Activated T-helper 1 cell treated with anti-CD3 and anti-CD28 coated beads, Interleukin-12 subunit alpha, Interleukin-12 subunit beta, Interleukin-2, Interleukin-4 antibody, amounts not matched to agents 30 ng/mL and 10 ng/mL and 1 ng/mL, durations not matched to agents 14 hours and 24 hours and 36 hours (primary cell): ENCODE measurements at regions of chr10 and their contacts with region 1.

Region 1: DNA sequence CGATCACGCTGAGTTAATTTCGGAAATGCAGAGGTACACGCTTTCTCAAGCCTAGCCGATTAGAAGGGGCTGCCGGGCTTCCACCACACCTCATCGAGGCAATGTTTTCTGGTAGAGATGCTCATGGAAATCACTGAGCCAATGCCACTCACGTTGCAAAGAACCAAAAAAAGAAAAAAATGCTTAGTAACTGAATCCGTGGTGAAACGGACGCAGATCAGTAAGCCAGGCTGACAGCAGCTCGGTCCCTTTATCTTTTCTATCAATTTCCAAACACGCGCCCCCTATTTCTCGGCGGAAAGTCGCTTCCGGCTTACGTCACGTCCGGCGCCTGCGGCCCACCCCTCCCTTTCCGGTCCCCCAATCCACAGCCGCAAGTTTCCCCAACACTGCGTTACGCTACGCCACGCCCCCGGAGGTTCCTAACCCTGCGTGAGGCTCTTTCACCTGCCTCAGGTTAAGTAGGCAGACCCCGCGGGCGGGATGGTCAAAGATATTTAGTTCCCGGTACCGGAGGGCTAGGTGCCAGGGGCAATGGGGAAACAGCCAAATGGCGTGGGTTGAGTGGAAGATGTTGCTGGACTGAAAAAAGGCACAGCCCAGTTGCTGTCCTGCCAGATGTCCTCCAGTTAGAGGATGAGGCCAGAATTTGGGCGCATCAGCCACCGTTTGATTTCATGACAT is at the start of gene NSUN6:
- DNase-seq: peak; percentile 91
- H3K4me3 Mint-ChIP-seq: peak within 1 kb of the TSS; percentile 96
- H3K27ac Mint-ChIP-seq: peak within 1 kb of the TSS; percentile 96
- H3K4me1 Mint-ChIP-seq: peaks cover 48% of the 10 kb centered on the region
- H3K27me3 Mint-ChIP-seq: no peaks in the 10 kb centered on the region
- total RNA-seq, gene NSUN6: 12.2 and 12.8 TPM in 2 replicates

Region 2: DNA sequence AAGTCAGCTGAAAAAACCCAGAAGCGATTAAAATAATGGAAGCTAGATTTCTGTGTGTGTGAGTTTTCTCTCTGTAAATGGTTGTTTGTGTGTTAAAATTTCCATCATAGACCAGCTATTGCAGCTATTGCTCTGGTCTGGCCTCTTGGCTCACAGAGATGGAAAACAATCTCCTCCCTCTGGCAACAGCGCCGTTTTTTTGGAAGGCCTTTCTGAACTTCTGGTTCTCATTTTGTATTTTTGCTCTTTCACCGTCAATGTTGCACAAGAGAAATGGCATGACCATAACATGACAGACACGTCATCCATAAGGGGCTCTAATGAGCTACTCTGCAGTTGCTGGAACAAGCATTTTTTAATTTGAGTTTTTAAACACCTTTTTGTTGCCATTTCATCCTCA is 1612.8 kb before region 1 on chr10:
- intact Hi-C with region 1: no loop called
- DNase-seq: no peak
- H3K4me3 Mint-ChIP-seq: no peak overlapping the region
- H3K27ac Mint-ChIP-seq: no peak overlapping the region
- H3K4me1 Mint-ChIP-seq: peaks cover 6% of the 10 kb centered on the region
- H3K27me3 Mint-ChIP-seq: peaks cover 4% of the 10 kb centered on the region

Region 3: GRCh38 chr10:17836942-17837341 is 814.5 kb before region 1 on chr10:
- intact Hi-C with region 1: no loop called
- DNase-seq: no peak
- H3K4me3 Mint-ChIP-seq: no peak overlapping the region
- H3K27ac Mint-ChIP-seq: no peak overlapping the region
- H3K4me1 Mint-ChIP-seq: no peaks in the 10 kb centered on the region
- H3K27me3 Mint-ChIP-seq: peaks cover 4% of the 10 kb centered on the region

Region 4: DNA sequence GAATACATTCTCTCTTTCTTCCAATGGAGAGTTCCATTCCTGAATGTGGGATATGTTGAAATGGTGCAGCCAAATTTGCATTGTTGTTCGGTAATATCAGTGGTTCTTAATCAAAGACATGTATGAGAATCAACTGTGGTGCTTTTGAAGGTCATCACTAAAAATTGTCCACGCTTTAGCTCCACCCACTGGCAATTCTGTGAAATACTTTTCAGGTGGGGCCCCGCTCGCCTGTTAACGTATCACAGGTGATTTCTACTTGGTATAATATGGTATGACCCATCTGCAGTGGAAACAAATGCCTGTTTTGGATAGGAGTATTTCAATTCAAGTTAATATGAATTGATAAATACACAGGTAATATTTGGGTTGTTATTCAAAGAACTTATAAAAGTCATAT is 178.5 kb before region 1 on chr10:
- intact Hi-C with region 1: no loop called
- DNase-seq: no peak
- H3K4me3 Mint-ChIP-seq: no peak overlapping the region
- H3K27ac Mint-ChIP-seq: no peak overlapping the region
- H3K4me1 Mint-ChIP-seq: peaks cover 15% of the 10 kb centered on the region
- H3K27me3 Mint-ChIP-seq: no peaks in the 10 kb centered on the region

Region 5: DNA sequence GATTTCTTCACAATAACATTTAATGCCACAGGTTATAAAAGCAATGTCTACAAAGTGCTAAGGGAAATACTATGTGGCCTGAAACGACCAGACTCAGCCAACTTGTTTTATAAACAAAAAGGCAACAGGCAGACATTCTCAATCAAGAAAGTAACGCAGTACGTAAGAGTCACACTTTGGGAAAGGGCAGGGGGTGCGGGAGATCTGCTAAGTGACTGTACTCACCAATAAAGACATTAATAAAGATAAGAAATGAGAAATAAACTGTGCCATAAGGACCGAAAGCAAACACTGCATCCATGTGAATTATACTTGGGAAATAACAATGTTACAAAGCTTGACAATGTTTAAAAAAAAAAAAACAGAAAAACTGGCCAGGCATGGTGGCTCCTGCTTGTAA is 25.6 kb before region 1 on chr10:
- intact Hi-C with region 1: loop called (anchors 2 kb)
- DNase-seq: no peak
- H3K4me3 Mint-ChIP-seq: peak overlapping the region; percentile 32
- H3K27ac Mint-ChIP-seq: no peak overlapping the region
- H3K4me1 Mint-ChIP-seq: peaks cover 10% of the 10 kb centered on the region
- H3K27me3 Mint-ChIP-seq: no peaks in the 10 kb centered on the region

Region 6: DNA sequence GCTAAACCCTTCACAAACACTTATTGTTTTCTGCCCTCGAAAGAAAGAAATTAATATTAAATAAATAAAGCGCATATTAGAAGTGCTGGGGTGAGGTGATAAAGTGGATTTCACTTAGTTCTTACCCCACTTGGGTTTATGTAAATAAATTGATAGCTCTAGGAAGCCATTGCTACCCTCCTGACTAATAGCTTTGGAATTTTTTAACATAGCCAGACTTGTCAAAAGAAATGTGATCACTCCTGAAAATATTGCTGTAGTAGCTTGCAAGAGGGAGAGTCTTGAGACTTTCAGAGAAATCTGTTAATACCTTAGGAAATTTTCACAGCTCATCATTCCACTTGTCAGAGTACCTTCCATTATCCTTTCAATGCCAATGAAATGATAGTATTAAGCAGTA is 15.3 kb after region 1 on chr10:
- intact Hi-C with region 1: loop called (anchors 2 kb)
- DNase-seq: no peak
- H3K4me3 Mint-ChIP-seq: no peak overlapping the region
- H3K27ac Mint-ChIP-seq: no peak overlapping the region
- H3K4me1 Mint-ChIP-seq: peaks cover 24% of the 10 kb centered on the region
- H3K27me3 Mint-ChIP-seq: no peaks in the 10 kb centered on the region

Region 7: GRCh38 chr10:18737841-18738240 is 86.4 kb after region 1 on chr10:
- intact Hi-C with region 1: no loop called
- DNase-seq: no peak
- H3K4me3 Mint-ChIP-seq: no peak overlapping the region
- H3K27ac Mint-ChIP-seq: no peak overlapping the region
- H3K4me1 Mint-ChIP-seq: no peaks in the 10 kb centered on the region
- H3K27me3 Mint-ChIP-seq: no peaks in the 10 kb centered on the region